Activated CD4-positive, alpha-beta memory T cell treated with anti-CD3 and anti-CD28 coated beads for 36 hours (primary cell): ENCODE measurements at regions of chr9 and their contacts with region 1.

Region 1: DNA sequence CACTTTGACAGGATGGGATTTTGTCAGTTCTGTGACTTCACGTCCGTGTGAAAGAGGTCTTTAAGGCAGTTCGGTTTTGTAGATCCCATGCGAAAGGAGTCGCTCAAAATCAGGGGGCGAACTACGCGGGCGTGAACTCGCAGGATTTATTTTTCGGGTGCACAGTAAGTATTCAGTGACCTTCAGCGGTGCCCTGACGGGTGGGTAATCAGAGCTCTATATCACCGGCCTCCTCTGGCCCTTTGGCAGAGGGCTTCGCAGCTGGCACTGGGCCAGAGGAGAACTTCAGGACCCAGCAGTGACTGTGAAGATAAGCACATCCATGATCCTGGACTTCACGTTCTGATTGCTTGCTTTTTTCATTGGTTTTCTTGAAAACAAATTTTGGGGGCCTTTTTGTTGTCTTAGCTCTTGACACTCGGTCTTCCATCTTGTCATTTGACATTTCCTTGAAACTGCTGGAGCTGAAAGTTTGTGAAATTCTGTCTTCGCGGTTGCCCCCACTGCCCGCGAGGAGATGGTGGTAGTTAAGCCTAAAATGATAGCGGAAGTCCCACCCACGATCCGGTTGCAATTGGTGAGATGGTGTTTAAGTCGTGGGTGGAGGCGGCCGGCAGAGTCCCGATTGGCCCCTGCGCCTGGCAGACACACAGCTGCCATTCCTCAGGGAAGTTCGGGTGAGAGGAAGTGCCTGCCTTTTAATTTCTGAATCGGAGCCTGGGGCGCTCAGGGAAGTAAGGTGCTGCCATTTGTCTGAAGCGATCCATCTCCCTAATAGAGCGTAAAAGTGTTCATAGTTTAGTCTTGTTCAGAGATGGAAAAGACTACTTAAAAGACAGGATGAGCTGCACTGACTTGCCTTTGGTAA is at the start of gene FAM120AOS:
- DNase-seq: peak; percentile 92
- H3K4me3 Mint-ChIP-seq: peak within 1 kb of the TSS; percentile 91
- H3K27ac Mint-ChIP-seq: peak within 1 kb of the TSS; percentile 93
- H3K4me1 Mint-ChIP-seq: peaks cover 44% of the 10 kb centered on the region
- H3K27me3 Mint-ChIP-seq: no peaks in the 10 kb centered on the region
- total RNA-seq, gene FAM120AOS: 35.4 to 36.4 TPM

Region 2: DNA sequence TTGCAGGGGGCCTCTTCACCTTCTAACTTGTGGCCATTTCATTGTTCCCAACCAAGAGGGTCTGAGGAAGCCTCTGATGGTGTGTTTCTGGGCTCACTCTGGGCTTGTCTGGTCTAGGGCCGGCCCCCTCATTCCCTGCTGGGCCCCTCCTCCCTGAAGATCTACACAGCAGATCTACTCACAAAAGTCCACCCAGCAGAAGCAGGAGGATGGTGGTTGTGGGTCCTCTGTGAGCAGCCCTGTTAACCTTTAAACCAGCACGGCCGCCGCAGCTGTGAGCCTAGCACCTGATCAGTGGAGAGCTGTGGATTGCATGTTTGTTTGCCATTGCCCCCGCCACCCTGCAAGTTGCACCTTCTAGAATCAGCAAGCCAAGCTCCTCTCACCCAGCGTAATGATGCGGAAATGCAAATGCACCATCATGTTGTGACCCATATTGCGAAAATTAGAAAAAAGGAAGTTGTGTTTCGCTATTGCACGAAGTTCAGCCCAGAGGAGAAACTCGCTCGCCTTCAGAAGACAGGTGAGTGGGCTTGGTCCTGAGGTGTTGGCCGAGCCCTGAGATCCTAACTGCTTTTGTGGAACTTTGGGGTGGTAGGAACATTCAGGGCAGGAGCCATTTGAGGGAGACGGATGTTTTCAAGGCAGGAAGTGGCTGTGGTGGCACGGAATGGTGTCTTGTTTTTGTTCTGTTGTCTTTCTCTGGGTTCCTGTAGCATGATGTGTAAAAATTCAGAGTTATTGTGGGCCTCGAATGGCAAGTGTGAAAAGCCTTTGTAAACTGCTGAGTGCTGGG is 489.3 kb before region 1 on chr9:
- CTCF ChIA-PET with region 1: no interaction called
- POLR2A ChIA-PET with region 1: no interaction called
- intact Hi-C with region 1: loop called (anchors 5 kb)
- DNase-seq: peak; percentile 86
- H3K4me3 Mint-ChIP-seq: peak overlapping the region; percentile 96
- H3K27ac Mint-ChIP-seq: peak overlapping the region; percentile 100
- H3K4me1 Mint-ChIP-seq: peaks cover 57% of the 10 kb centered on the region
- H3K27me3 Mint-ChIP-seq: no peaks in the 10 kb centered on the region

Region 3: GRCh38 chr9:93154315-93154903 is 298.9 kb before region 1 on chr9:
- CTCF ChIA-PET with region 1: no interaction called
- POLR2A ChIA-PET with region 1: interaction called, 3 read pairs
- intact Hi-C with region 1: loop called (anchors 2 kb)
- DNase-seq: peak; percentile 69
- H3K4me3 Mint-ChIP-seq: no peak overlapping the region
- H3K27ac Mint-ChIP-seq: no peak overlapping the region
- H3K4me1 Mint-ChIP-seq: peaks cover 30% of the 10 kb centered on the region
- H3K27me3 Mint-ChIP-seq: no peaks in the 10 kb centered on the region

Region 4: DNA sequence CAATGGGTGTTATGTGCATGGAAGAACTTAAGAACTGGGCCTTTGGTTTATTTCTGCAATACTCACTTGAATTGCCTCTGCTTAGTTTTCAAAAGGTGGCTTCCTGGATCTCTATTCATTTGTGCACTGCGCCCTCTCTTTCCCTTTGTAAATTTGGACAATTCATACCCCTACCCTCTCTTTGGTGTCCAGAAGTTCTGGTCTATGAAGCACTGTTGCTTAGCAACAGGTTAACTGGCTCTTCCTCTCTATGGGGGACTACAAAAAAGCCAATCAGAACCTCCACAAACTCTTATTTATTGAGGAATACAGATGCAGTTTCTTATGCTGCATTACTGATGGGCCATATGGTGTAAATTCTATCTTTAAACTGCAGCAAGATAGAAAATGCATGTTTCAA is 15.3 kb before region 1 on chr9:
- CTCF ChIA-PET with region 1: no interaction called
- POLR2A ChIA-PET with region 1: no interaction called
- intact Hi-C with region 1: no loop called
- DNase-seq: no peak
- H3K4me3 Mint-ChIP-seq: no peak overlapping the region
- H3K27ac Mint-ChIP-seq: no peak overlapping the region
- H3K4me1 Mint-ChIP-seq: no peaks in the 10 kb centered on the region
- H3K27me3 Mint-ChIP-seq: no peaks in the 10 kb centered on the region

Region 5: DNA sequence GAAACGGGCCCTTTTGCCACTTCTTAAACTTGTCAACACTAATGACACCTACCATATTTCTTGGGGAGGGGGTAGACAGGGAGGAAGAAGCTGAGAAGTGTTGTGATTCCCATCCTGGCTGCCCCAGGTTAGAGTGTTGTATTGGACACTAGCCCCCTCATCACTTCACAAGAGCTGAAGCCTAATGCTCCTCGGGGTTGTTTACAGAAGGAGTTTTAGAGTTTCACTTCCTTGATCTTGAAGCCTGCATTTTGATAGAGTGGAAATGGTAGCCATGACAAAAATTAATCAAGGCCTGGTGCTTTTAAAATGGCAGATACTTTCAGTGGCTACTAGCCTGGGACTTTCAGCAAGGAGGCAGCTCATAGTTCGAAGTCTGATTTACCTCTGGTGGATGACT is 11.1 kb after region 1 on chr9:
- CTCF ChIA-PET with region 1: interaction called, 12 read pairs
- POLR2A ChIA-PET with region 1: interaction called, 25 read pairs
- intact Hi-C with region 1: loop called (anchors 1 kb)
- DNase-seq: no peak
- H3K4me3 Mint-ChIP-seq: peak overlapping the region; percentile 45
- H3K27ac Mint-ChIP-seq: peak overlapping the region; percentile 94
- H3K4me1 Mint-ChIP-seq: peaks cover 84% of the 10 kb centered on the region
- H3K27me3 Mint-ChIP-seq: no peaks in the 10 kb centered on the region

Region 6: GRCh38 chr9:93501406-93501805 is 48.1 kb after region 1 on chr9:
- CTCF ChIA-PET with region 1: no interaction called
- POLR2A ChIA-PET with region 1: interaction called, 4 read pairs
- intact Hi-C with region 1: loop called (anchors 5 kb)
- DNase-seq: no peak
- H3K4me3 Mint-ChIP-seq: peak overlapping the region; percentile 39
- H3K27ac Mint-ChIP-seq: peak overlapping the region; percentile 49
- H3K4me1 Mint-ChIP-seq: peaks cover 49% of the 10 kb centered on the region
- H3K27me3 Mint-ChIP-seq: no peaks in the 10 kb centered on the region

Region 7: GRCh38 chr9:93566408-93567270 is 113.4 kb after region 1 on chr9:
- CTCF ChIA-PET with region 1: interaction called, 22 read pairs
- POLR2A ChIA-PET with region 1: interaction called, 10 read pairs
- intact Hi-C with region 1: loop called (anchors 1 kb)
- DNase-seq: peak; percentile 99
- H3K4me3 Mint-ChIP-seq: peak overlapping the region; percentile 86
- H3K27ac Mint-ChIP-seq: peak overlapping the region; percentile 88
- H3K4me1 Mint-ChIP-seq: peaks cover 25% of the 10 kb centered on the region
- H3K27me3 Mint-ChIP-seq: no peaks in the 10 kb centered on the region

Region 8: GRCh38 chr9:94166237-94166963 is 713.1 kb after region 1 on chr9:
- CTCF ChIA-PET with region 1: no interaction called
- POLR2A ChIA-PET with region 1: no interaction called
- intact Hi-C with region 1: loop called (anchors 5 kb)
- DNase-seq: peak; percentile 97
- H3K4me3 Mint-ChIP-seq: peak overlapping the region; percentile 81
- H3K27ac Mint-ChIP-seq: peak overlapping the region; percentile 81
- H3K4me1 Mint-ChIP-seq: peaks cover 43% of the 10 kb centered on the region
- H3K27me3 Mint-ChIP-seq: no peaks in the 10 kb centered on the region